PC-9 (cell line): ENCODE measurements at regions of chrX and their contacts with region 1.

Region 1: DNA sequence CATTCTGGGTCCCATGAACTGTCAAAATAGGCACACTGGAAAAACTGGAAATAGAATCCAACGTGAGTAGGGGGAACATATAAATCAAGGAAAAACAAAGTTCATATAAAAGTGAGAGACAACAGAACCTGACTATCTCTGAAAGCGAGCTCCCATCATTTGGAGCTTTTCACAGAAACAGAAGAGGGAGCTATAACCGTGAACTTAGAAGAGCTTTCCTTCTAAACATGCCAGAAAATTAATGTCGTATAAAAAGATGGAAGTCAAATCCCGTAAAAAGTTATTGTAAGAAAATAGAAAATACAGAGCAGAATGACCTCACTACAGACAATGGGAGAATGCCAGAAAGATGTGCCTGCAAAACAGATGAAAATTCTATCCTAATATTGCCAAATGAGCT is 23.9 kb upstream of the HSD17B10 start:
- DNase-seq: no peak
- H3K4me3 ChIP-seq: no peak overlapping the region
- H3K27ac ChIP-seq: no peak overlapping the region
- H3K4me1 ChIP-seq: peaks cover 4% of the 10 kb centered on the region; the same call in 1 of the 2 replicates
- H3K27me3 ChIP-seq: no peaks in the 10 kb centered on the region
- CTCF ChIP-seq: no peak

Region 2: DNA sequence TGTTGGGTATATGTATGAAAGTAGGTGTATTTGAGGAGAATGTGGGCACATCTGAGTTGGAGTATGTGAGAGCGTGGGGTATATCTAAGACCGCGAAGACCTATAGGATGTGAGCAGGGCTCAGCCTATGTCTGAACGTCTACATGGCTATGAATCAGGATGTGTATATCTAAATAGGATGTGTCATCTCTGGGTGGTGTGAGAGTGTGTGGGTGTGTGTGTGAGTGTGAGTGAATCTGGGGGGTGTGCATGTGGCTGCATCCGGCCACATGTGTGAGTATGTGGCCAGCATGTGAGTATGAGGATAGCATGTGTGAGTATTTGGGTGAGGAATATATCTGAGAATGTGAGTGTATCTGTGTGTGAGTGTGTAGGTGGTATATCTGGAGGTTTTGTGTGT is 401.8 kb before region 1 on chrX:
- CTCF ChIA-PET with region 1: no interaction called
- POLR2A ChIA-PET with region 1: interaction called, 26 read pairs
- intact Hi-C with region 1: no loop called
- DNase-seq: no peak
- H3K4me3 ChIP-seq: no peak overlapping the region
- H3K27ac ChIP-seq: no peak overlapping the region
- H3K4me1 ChIP-seq: no peaks in the 10 kb centered on the region
- H3K27me3 ChIP-seq: no peaks in the 10 kb centered on the region
- CTCF ChIP-seq: no peak

Region 3: GRCh38 chrX:53114864-53115549 is 343.1 kb before region 1 on chrX:
- CTCF ChIA-PET with region 1: no interaction called
- POLR2A ChIA-PET with region 1: no interaction called
- intact Hi-C with region 1: no loop called
- DNase-seq: no peak
- H3K4me3 ChIP-seq: no peak overlapping the region
- H3K27ac ChIP-seq: no peak overlapping the region
- H3K4me1 ChIP-seq: no peaks in the 10 kb centered on the region
- H3K27me3 ChIP-seq: no peaks in the 10 kb centered on the region
- CTCF ChIP-seq: no peak

Region 4: DNA sequence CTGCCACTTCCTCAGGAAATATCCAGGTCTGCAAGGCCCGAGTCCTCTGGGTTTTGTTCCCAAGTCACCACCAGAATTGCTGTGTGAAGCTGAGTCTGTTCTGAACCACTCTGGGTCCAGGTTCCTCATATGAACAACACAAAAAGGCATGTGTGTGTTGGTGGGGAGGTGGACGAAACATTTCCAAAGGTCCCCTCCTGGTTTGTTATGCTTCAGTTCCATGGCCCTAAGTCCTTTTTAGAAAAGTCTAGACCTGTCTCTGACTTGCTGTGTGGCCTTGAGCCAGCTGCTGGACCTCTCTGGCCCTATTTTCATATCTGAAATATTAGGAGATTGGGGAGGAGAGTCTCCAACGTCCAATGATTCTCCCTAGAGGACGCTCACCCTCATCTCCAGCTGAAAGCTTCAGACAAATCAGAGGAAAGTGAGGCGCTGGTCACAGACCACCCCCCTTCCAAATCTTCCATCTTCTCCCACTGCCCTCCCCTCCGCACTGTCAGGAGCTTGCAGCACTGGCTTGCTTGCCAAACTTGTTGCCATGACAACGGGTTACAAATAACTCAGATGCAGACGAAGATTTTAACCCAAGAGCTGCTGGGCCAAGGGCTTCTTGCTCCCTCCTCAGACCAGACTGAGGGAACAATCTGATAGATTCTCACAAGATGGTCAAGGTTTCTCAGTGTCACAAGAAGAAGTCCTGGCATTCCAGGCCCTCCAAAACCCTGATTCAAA is 100.1 kb before region 1 on chrX:
- CTCF ChIA-PET with region 1: no interaction called
- POLR2A ChIA-PET with region 1: no interaction called
- intact Hi-C with region 1: no loop called
- DNase-seq: no peak
- H3K4me3 ChIP-seq: no peak overlapping the region
- H3K27ac ChIP-seq: no peak overlapping the region
- H3K4me1 ChIP-seq: no peaks in the 10 kb centered on the region
- H3K27me3 ChIP-seq: no peaks in the 10 kb centered on the region
- CTCF ChIP-seq: no peak

Region 5: GRCh38 chrX:53538781-53539180 is 80.7 kb after region 1 on chrX:
- CTCF ChIA-PET with region 1: interaction called, 10 read pairs
- POLR2A ChIA-PET with region 1: no interaction called
- intact Hi-C with region 1: no loop called
- DNase-seq: no peak
- H3K4me3 ChIP-seq: no peak overlapping the region
- H3K27ac ChIP-seq: no peak overlapping the region
- H3K4me1 ChIP-seq: no peaks in the 10 kb centered on the region
- H3K27me3 ChIP-seq: no peaks in the 10 kb centered on the region
- CTCF ChIP-seq: no peak

Region 6: DNA sequence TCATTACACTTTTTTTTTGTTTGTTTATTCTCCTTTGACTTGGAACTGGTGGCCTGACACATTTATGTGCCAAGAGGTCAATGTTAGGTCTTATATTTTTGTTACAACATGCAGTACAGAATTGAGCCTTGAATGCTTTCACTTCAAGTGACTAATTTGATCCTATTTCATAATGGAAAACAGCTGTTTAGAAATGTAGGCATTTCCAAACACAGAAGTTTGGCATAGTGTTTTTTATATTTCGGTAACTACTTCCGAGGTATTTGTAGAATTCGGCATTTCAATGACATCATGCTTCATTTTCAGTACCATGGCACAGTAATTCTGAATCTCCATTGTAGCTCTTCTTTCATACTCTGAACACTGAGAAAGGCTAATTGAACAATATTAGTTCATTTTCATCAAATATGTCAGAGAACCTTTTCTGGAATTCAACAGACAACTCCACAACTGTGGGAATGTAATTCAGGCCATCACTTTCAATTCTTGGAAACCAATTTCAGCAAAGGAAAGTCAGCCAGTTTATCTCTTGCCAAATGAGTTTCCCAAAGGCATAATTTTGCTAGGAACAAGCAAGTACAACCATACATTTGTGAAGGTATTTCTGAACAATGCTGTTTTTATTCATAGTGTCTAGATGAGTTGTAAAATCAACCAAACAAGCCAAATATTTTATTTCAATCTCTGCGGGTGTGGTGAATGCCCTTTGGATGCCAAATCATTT is 713.6 kb after region 1 on chrX:
- CTCF ChIA-PET with region 1: no interaction called
- POLR2A ChIA-PET with region 1: no interaction called
- intact Hi-C with region 1: no loop called
- DNase-seq: no peak
- H3K4me3 ChIP-seq: no peak overlapping the region
- H3K27ac ChIP-seq: no peak overlapping the region
- H3K4me1 ChIP-seq: no peaks in the 10 kb centered on the region
- H3K27me3 ChIP-seq: no peaks in the 10 kb centered on the region
- CTCF ChIP-seq: no peak